ENCODE measurements at regions of chr18 and their contacts with region 1.

Region 1: DNA sequence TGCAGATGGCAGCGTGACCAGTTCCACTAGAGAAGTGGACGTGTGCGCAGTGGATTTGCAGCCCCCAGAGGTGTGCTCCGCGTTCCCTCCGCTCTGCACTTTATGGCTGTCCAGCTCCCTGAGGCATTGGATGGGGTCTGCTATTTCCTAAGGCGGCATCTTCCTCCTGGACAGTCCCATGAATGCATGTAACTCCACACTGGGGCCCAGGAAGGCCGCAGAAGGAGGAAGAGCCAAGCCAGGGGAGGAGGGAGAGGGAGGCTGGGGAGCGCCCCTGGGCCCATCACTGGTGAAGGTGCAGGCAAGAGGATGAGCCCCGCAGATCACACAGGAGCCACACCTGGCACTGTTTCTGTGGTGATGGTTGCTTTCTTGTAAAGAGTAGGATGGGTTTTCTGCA is 99.1 kb downstream of the PTGR3 start:
- DNase-seq: no peak
- ATAC-seq: no peak
- H3K4me3 ChIP-seq: no peak overlapping the region
- H3K4me3 Mint-ChIP-seq: no peak overlapping the region
- H3K27ac ChIP-seq: no peak overlapping the region
- H3K27ac Mint-ChIP-seq: no peak overlapping the region
- H3K4me1 ChIP-seq: no peaks in the 10 kb centered on the region
- H3K4me1 Mint-ChIP-seq: no peaks in the 10 kb centered on the region
- H3K27me3 ChIP-seq: peaks cover 0 to 25% of the 10 kb centered on the region in 2 experiments
- H3K27me3 Mint-ChIP-seq: peaks cover 0 to 2% of the 10 kb centered on the region in 2 donors

Region 2: GRCh38 chr18:75088622-75089211 is 21.1 kb before region 1 on chr18:
- CTCF ChIA-PET with region 1: no interaction called
- POLR2A ChIA-PET with region 1: no interaction called
- DNase-seq: peak in 1 of 35 experiments; percentile 12
- ATAC-seq: no peak
- H3K4me3 ChIP-seq: no peak overlapping the region
- H3K4me3 Mint-ChIP-seq: no peak overlapping the region
- H3K27ac ChIP-seq: no peak overlapping the region
- H3K27ac Mint-ChIP-seq: no peak overlapping the region
- H3K4me1 ChIP-seq: no peaks in the 10 kb centered on the region
- H3K4me1 Mint-ChIP-seq: no peaks in the 10 kb centered on the region
- H3K27me3 ChIP-seq: no peaks in the 10 kb centered on the region
- H3K27me3 Mint-ChIP-seq: no peaks in the 10 kb centered on the region

Region 3: GRCh38 chr18:76697441-76697901 is 1587.7 kb after region 1 on chr18:
- CTCF ChIA-PET with region 1: no interaction called
- POLR2A ChIA-PET with region 1: interaction called in 1 of 2 experiments, 12 read pairs
- DNase-seq: no peak
- ATAC-seq: no peak
- H3K4me3 ChIP-seq: no peak overlapping the region
- H3K4me3 Mint-ChIP-seq: no peak overlapping the region
- H3K27ac ChIP-seq: no peak overlapping the region
- H3K27ac Mint-ChIP-seq: no peak overlapping the region
- H3K4me1 ChIP-seq: peaks cover 0 to 2% of the 10 kb centered on the region in 2 experiments
- H3K4me1 Mint-ChIP-seq: peaks cover 0 to 3% (median 0%) of the 10 kb centered on the region in 3 donors
- H3K27me3 ChIP-seq: peaks cover 7 to 31% of the 10 kb centered on the region in 2 experiments
- H3K27me3 Mint-ChIP-seq: peaks cover 32 to 64% of the 10 kb centered on the region in 2 donors

Measured in T-cell (primary cell).